ENCODE measurements at regions of chr1 and their contacts with region 1.

Region 1: GRCh38 chr1:119367427-119368124 is 1.0 kb upstream of the HAO2 start:
- DNase-seq: no peak
- ATAC-seq: no peak
- H3K4me3 Mint-ChIP-seq: no peak overlapping the region
- H3K27ac Mint-ChIP-seq: no peak overlapping the region
- H3K4me1 Mint-ChIP-seq: no peaks in the 10 kb centered on the region
- H3K27me3 Mint-ChIP-seq: peaks cover 35% of the 10 kb centered on the region

Region 2: DNA sequence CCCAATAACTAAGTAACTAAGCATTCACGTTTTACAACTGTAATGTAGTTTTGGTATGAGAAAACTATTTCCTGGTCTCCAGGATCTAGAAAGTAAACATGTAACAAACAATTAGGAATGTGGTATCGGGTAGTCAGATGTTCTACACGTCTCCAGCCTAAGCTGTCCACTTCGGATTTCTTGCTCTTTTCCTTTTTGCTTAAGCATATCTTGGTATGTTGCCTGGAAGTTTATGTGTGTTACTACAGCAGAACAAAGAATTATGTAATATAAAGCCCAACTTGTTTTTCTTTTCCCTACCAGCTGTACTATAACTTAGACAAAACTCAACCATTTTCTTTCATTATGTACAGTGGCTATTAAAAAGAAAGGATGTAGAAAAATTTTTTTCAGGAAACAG is 206.7 kb before region 1 on chr1:
- CTCF ChIA-PET with region 1: no interaction called
- DNase-seq: no peak
- ATAC-seq: no peak
- H3K4me3 Mint-ChIP-seq: no peak overlapping the region
- H3K27ac Mint-ChIP-seq: no peak overlapping the region
- H3K4me1 Mint-ChIP-seq: no peaks in the 10 kb centered on the region
- H3K27me3 Mint-ChIP-seq: no peaks in the 10 kb centered on the region

Region 3: DNA sequence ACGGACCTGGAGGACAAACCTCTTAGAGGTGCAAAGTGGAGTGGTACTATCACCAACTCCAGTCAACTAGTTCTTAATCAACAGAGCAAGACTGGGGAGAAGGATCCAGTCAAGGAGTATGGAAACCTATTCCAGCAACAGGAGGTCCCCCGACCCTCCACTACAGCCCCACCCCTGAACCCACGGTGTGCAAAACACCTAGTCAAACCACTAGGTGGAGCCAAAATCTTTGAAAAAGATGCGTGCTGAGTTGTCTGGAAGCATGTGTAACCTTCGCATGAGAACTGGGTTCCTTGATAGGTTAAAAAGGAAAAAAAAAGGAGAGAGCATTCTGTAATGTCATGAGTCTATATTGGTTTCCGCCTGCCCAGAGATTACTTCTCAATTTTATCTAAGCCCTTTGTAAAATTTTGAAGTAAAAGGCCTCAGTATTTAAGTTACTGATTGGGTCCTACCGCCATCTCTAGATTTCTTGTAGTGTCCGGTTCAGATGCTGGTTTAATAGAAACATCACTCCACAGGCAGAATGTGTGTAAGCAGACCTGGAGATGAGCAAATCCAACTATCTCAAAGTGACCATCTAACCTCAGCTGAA is 80.9 kb before region 1 on chr1:
- CTCF ChIA-PET with region 1: interaction called, 10 read pairs
- DNase-seq: no peak
- ATAC-seq: peak; percentile 61
- H3K4me3 Mint-ChIP-seq: no peak overlapping the region
- H3K27ac Mint-ChIP-seq: no peak overlapping the region
- H3K4me1 Mint-ChIP-seq: no peaks in the 10 kb centered on the region
- H3K27me3 Mint-ChIP-seq: peaks cover 22% of the 10 kb centered on the region

Region 4: DNA sequence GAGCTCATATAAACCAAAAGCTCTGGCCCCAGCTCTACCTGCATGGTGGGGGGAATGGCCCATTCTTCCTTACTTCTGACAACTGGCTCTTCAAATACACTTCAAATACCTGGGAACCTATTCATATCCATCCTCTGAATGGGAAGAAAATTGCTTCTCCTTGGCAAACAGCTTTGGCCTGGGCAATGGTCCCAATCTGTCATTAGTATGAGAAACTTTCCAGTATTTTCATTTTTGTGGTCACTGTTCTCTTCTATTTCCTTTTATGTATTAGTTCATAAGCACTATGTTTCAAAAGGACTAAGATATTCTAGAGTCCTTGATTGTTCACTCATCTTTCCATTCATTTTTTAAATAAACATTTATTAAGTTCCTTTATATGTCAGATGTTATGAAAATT is 42.2 kb after region 1 on chr1:
- CTCF ChIA-PET with region 1: no interaction called
- DNase-seq: no peak
- ATAC-seq: no peak
- H3K4me3 Mint-ChIP-seq: no peak overlapping the region
- H3K27ac Mint-ChIP-seq: no peak overlapping the region
- H3K4me1 Mint-ChIP-seq: no peaks in the 10 kb centered on the region
- H3K27me3 Mint-ChIP-seq: peaks cover 3% of the 10 kb centered on the region

Region 5: DNA sequence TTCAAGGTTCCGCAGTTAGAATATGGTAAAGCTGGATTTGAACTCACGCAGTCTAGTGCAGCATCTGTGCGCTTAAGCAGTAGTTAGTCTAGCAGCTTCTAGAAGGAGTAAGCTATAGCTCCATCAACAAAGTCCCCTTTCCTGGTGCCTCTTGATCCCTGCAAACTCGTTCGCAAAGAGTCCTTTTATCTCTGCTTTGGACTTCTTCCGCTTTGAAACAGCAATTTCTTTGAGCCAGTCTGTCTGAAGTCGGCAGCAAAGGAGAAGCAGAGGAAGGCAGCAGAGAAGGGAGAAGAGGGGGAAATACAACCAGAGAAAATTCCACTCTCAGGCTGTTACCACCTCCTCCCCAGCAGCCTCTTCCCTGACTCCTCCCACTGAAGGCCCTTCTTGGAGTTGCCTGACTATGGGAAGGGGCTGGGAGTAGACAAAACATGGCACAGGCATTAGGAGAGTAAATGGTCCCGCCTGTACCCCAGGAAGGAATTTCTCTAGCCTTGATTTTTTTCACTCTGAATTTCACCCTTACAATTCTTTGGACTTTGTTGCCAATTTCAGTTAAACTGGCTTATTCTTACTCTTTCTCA is 73.2 kb after region 1 on chr1:
- CTCF ChIA-PET with region 1: no interaction called
- DNase-seq: no peak
- ATAC-seq: no peak
- H3K4me3 Mint-ChIP-seq: no peak overlapping the region
- H3K27ac Mint-ChIP-seq: no peak overlapping the region
- H3K4me1 Mint-ChIP-seq: no peaks in the 10 kb centered on the region
- H3K27me3 Mint-ChIP-seq: peaks cover 8% of the 10 kb centered on the region